Heart left ventricle (tissue), 16 donors: ENCODE measurements at regions of chr4 and their contacts with region 1.

Region 1: GRCh38 chr4:105520817-105521790 is 31.3 kb upstream of the ARHGEF38 start:
- DNase-seq: peak in 1 of 5 donors; percentile 20
- ATAC-seq: peak in 2 of 4 donors; percentile 48 to 65
- H3K4me3 ChIP-seq: no peak overlapping the region
- H3K27ac ChIP-seq: no peak overlapping the region
- H3K4me1 ChIP-seq: no peaks in the 10 kb centered on the region
- H3K27me3 ChIP-seq: peaks cover 0 to 5% (median 0%) of the 10 kb centered on the region in 9 donors
- CTCF ChIP-seq: peak; percentile 40 to 73 (median 54)
- POLR2A ChIP-seq: no peak

Region 2: DNA sequence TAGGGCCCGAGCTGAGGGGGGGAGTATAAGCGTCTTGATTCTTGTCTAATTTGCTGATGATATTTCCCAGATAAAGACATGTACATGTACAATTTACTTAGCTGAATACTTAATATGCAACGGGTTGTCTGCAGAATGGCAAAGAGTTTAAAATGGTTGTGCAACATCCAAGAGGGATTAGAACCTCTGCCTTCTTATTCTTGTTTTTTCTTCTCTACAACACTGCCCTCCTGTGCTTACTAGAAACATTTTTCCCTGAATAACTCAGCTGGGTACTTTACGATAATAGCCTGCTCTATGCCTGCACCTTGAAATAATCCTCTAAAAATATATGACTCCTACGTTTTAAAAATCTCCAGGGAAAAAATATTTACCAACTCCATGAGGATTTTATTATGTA is 145.6 kb after region 1 on chr4:
- intact Hi-C with region 1: loop called (anchors 1 to 5 kb)
- DNase-seq: no peak
- ATAC-seq: peak; percentile 49 to 81 (median 66)
- H3K4me3 ChIP-seq: no peak overlapping the region
- H3K27ac ChIP-seq: no peak overlapping the region
- H3K4me1 ChIP-seq: peaks cover 0 to 10% (median 0%) of the 10 kb centered on the region in 12 donors
- H3K27me3 ChIP-seq: no peaks in the 10 kb centered on the region
- CTCF ChIP-seq: peak in 10 of 12 donors; percentile 26 to 48 (median 34)
- POLR2A ChIP-seq: no peak

Region 3: DNA sequence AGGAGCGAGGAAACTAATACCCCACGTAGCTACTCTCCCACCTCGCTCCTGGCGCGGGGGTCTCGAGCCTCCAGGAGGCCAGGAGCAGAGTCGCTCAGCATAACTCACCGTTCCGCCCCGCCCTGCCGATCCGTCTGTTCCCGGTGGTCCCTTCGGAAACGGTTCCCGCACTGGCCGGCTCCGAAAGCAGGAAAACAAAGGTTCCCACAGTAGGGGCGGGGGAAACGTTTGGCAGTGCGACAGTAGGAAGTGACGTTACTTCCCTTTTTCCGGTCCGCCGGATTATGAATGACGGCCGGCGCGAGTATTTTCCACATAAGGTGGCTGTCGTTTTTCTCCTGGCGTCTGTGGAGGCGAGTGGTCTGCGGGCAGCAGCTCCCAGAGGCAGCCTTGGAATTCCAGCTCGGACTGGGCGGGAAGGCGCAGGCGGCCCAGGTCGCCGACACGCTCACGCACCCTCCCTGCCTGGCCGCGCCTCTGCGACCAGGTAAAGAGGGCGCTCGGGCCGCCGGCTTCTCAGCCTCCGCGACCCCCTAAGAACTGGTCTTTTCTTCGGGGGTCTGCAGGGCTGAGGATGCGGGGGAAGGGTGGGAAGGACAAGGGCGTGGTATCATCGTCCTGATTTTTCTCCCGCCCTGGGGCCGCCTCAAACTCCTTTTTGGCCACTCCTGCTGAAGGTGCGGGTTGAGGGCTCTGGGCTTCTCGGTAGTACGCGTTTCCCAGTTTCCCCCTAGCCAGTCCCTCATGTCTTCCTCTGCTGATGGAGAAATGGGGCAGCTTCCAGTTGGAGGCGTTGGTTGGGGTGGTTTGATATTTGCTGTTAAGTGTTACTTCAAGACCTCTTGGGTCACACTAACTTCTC is 187.7 kb after region 1 on chr4 and contains the starts of genes GSTCD and INTS12:
- intact Hi-C with region 1: loop called in 2 of 10 experiments (anchors 5 to 10 kb)
- DNase-seq: peak; percentile 91 to 93 (median 92)
- ATAC-seq: peak; percentile 95 to 99 (median 98)
- H3K4me3 ChIP-seq: peak within 1 kb of the TSS; percentile 70 to 97 (median 90)
- H3K27ac ChIP-seq: peak within 1 kb of the TSS; percentile 47 to 90 (median 86)
- H3K4me1 ChIP-seq: peaks cover 0 to 30% (median 18%) of the 10 kb centered on the region in 12 donors
- H3K27me3 ChIP-seq: no peaks in the 10 kb centered on the region
- CTCF ChIP-seq: no peak
- POLR2A ChIP-seq: peak in 1 of 2 donors; percentile 63
- total RNA-seq, gene GSTCD: 2.4 to 6.4 (median 5.0) TPM
- total RNA-seq, gene INTS12: 19.2 to 27.9 (median 22.2) TPM

Region 4: GRCh38 chr4:105715692-105716278 is 194.7 kb after region 1 on chr4:
- intact Hi-C with region 1: loop called in 1 of 10 experiments (anchors 10 kb)
- DNase-seq: no peak
- ATAC-seq: no peak
- H3K4me3 ChIP-seq: peak overlapping the region in 4 of 12 donors; percentile 6 to 27 (median 19)
- H3K27ac ChIP-seq: no peak overlapping the region
- H3K4me1 ChIP-seq: peaks cover 0 to 18% (median 0%) of the 10 kb centered on the region in 12 donors
- H3K27me3 ChIP-seq: no peaks in the 10 kb centered on the region
- CTCF ChIP-seq: peak; percentile 34 to 71 (median 52)
- POLR2A ChIP-seq: no peak